Heart left ventricle (tissue), 16 donors: ENCODE measurements at regions of chr13 and their contacts with region 1.

Region 1: DNA sequence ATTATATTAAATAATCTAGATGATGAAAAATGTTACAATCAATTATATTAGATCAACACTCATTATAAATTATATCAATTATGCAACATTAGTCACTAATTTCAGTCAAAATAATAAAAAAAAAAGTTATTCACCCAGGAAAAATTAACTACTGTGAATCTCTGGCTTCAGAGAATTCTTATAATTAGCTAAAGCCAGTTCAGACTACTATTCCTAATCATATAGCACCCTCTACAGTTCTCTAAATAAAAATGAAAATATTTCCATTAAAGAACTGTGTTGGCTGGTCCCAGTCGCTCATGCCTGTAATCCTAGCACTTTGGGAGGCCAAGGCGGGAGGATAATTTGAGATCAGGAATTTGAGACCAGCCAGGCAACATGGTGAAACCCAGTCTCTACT is 33.0 kb downstream of the XPO4 start:
- DNase-seq: no peak
- ATAC-seq: peak in 2 of 4 donors; percentile 34 to 46
- H3K4me3 ChIP-seq: no peak overlapping the region
- H3K27ac ChIP-seq: no peak overlapping the region
- H3K4me1 ChIP-seq: peaks cover 0 to 13% (median 6%) of the 10 kb centered on the region in 12 donors
- H3K27me3 ChIP-seq: no peaks in the 10 kb centered on the region
- CTCF ChIP-seq: peak in 8 of 12 donors; percentile 17 to 55 (median 42)
- POLR2A ChIP-seq: no peak

Region 2: GRCh38 chr13:20713751-20714150 is 155.8 kb before region 1 on chr13:
- intact Hi-C with region 1: loop called in 4 of 10 experiments (anchors 1 to 5 kb)
- DNase-seq: peak in 2 of 5 donors; percentile 59 to 63
- ATAC-seq: peak in 2 of 4 donors; percentile 49 to 56
- H3K4me3 ChIP-seq: peak overlapping the region in 3 of 12 donors; percentile 7 to 32 (median 14)
- H3K27ac ChIP-seq: peak overlapping the region in 11 of 12 donors; percentile 36 to 92 (median 65)
- H3K4me1 ChIP-seq: peaks cover 0 to 41% (median 19%) of the 10 kb centered on the region in 12 donors
- H3K27me3 ChIP-seq: no peaks in the 10 kb centered on the region
- CTCF ChIP-seq: no peak
- POLR2A ChIP-seq: no peak